SK-MEL-5 (cell line): ENCODE measurements at regions of chr1 and their contacts with region 1.

Region 1: GRCh38 chr1:110524311-110525251 is 5.6 kb upstream of the KCNA10 start:
- DNase-seq: peak; percentile 64

Region 2: GRCh38 chr1:110161877-110162276 is 362.7 kb before region 1 on chr1:
- in situ Hi-C with region 1: no loop called
- DNase-seq: no peak

Region 3: DNA sequence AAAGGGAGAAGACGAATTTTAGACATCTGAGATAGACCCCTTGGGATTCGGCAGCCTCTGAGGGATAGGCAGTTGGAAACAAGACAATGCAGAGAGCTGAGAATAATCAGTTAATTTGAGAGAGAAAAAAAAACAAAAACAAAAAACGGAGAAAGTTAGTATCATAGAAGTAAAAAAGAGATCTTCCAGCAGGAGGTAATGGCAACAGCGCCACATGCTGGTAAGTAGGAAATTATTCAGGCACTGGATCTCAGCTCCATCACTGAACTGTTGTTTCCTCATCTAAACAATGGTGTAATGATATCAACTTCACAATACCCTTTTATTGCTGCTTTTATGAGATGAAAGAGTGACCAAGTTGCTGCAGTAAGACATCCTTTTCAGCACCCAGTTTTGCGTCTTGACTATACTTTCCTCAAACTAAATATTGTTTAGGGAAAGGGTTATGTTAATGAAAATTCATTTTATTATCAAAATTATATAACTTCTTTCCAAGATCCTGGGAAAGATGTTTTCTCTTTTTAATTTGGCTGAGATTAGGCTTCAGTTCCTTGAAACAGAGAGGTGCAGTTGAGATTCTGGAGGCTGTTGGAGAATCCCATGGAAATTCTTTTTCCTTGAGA is 241.6 kb after region 1 on chr1:
- in situ Hi-C with region 1: loop called (anchors 25 kb)
- DNase-seq: peak; percentile 60